MCF 10A (cell line): ENCODE measurements at regions of chr12 and their contacts with region 1.

Region 1: GRCh38 chr12:39619660-39620433 is at the start of gene ABCD2:
- DNase-seq: peak; percentile 66
- H3K4me3 Mint-ChIP-seq: no peak within 1 kb of the TSS
- H3K27ac Mint-ChIP-seq: no peak within 1 kb of the TSS
- H3K4me1 Mint-ChIP-seq: no peaks in the 10 kb centered on the region
- H3K27me3 Mint-ChIP-seq: no peaks in the 10 kb centered on the region
- CTCF ChIP-seq: peak; percentile 31
- total RNA-seq, gene ABCD2: 0.20 and 0.42 TPM in 2 replicates

Region 2: DNA sequence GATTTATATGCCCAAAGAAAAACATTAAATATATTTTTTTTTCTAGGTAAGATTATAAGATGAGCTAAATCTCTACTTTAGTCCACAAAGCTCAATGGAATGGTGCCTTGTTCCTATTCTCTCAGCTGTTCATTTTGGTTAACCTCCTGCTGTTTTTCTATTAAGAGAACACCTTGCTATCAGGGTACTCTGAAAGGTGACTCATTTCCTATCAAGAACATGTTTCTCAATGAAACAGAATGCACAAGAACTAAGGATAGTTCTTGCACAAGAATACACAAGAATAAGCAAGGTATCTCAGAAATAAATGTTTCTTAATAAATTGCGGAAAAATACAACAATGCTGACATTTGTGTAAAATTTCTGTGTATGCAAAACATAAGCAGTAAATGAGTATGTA is 14.3 kb before region 1 on chr12:
- CTCF ChIA-PET with region 1: interaction called, 13 read pairs
- POLR2A ChIA-PET with region 1: interaction called, 23 read pairs
- intact Hi-C with region 1: no loop called
- DNase-seq: peak; percentile 82
- H3K4me3 Mint-ChIP-seq: peak overlapping the region; percentile 20
- H3K27ac Mint-ChIP-seq: peak overlapping the region; percentile 72
- H3K4me1 Mint-ChIP-seq: peaks cover 16% of the 10 kb centered on the region
- H3K27me3 Mint-ChIP-seq: no peaks in the 10 kb centered on the region
- CTCF ChIP-seq: no peak

Region 3: DNA sequence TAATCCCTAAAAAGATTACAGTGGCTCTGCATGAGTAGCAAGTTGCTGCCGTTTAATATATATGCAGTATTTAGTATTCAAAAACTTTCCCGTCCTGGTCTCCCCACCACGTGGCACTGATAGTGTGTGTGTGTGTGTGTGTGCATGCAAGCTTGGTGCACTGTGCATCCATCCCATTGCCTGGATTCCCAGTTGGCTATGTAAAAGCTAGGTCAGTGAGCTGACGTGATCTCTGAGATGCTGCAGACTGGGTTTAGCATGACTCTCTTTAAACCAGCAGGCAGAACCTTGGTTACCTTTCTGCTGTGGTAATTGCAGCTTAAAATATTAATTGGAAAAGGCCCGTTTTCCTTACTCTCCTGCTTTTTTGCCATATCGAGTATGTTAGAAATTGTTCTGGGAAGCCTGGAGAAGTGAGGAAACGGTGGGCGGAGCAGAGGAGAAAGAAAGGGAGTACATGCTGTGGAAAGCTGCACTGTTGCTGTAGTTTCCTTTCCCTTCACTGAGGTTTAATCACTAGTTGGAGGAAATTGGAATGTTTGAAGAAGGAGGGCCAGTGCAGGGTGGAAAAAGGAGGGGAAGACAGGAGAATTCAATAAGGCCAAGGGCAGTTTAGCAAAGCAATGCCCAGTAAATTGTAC is 1068.4 kb after region 1 on chr12:
- CTCF ChIA-PET with region 1: no interaction called
- POLR2A ChIA-PET with region 1: no interaction called
- intact Hi-C with region 1: no loop called
- DNase-seq: no peak
- H3K4me3 Mint-ChIP-seq: no peak overlapping the region
- H3K27ac Mint-ChIP-seq: no peak overlapping the region
- H3K4me1 Mint-ChIP-seq: no peaks in the 10 kb centered on the region
- H3K27me3 Mint-ChIP-seq: peaks cover 55% of the 10 kb centered on the region
- CTCF ChIP-seq: no peak